ENCODE measurements at regions of chr5 and their contacts with region 1.

Region 1: DNA sequence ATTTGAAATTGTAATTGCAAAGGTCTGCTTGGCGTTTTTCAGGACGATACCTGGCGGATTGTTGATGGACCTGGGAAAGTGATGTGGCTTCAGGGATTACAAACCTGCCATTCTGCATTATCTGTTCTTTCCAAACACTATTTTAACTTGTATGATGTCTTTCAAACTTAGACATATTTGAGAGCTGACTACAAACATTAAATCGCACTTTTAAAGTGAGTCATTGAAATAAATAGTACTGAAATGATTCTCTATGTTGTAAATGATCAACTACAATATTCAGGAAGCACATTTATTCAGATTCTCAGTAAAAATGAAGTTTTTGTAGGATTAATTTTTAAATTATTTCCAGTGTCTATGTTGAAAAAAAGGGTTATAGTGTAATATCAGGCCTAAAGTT is 32.3 kb upstream of the TMEM171 start:
- ATAC-seq: no peak
- H3K4me3 ChIP-seq: no peak overlapping the region
- H3K27ac ChIP-seq: no peak overlapping the region
- H3K4me1 ChIP-seq: no peaks in the 10 kb centered on the region

Region 2: DNA sequence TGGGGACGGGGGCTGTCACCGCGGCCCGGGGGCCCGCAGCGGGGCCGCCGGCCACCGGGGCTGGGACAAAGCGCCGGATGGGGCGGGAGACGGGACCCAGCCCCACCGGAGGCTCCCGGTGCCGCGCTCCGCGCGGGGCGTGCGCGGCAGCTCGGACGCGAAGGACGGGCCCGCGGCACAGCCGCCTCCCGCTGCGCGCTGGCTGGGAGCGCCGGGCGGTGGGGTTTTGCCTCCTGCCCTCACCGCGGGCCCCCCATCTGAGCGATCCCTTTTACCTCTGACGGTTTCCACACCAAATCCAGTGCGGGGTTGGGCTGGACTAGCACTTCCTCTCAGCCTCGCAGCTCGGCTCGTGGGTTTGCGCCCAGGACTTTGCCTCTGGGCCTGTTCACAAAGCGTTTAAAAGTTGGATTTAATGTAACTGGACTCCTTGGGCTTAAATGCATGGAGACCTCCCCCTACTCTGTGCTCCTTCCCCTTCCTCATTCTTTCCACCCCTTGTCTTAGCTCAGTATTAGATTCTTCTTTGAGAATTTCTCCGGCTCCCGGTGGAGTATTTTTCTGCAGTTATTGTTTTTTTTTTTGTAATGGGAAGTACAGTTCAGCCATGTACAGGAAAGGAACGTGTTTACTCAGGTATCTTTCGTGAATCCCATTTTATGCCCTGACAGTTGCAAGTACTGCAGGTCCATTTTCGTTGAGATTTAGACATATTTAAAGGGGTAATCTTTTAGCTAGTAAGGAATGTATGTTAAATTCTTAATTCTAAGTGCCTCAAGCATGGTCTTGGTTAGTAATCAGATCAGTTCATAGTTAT is 131.5 kb before region 1 on chr5:
- in situ Hi-C with region 1: no loop called
- ATAC-seq: peak in 4 of 8 experiments; percentile 35 to 61 (median 49)
- H3K4me3 ChIP-seq: peak overlapping the region; percentile 70 to 87 (median 78)
- H3K27ac ChIP-seq: peak overlapping the region; percentile 68 to 77
- H3K4me1 ChIP-seq: peaks cover 0 to 5% of the 10 kb centered on the region in 2 donors

Region 3: DNA sequence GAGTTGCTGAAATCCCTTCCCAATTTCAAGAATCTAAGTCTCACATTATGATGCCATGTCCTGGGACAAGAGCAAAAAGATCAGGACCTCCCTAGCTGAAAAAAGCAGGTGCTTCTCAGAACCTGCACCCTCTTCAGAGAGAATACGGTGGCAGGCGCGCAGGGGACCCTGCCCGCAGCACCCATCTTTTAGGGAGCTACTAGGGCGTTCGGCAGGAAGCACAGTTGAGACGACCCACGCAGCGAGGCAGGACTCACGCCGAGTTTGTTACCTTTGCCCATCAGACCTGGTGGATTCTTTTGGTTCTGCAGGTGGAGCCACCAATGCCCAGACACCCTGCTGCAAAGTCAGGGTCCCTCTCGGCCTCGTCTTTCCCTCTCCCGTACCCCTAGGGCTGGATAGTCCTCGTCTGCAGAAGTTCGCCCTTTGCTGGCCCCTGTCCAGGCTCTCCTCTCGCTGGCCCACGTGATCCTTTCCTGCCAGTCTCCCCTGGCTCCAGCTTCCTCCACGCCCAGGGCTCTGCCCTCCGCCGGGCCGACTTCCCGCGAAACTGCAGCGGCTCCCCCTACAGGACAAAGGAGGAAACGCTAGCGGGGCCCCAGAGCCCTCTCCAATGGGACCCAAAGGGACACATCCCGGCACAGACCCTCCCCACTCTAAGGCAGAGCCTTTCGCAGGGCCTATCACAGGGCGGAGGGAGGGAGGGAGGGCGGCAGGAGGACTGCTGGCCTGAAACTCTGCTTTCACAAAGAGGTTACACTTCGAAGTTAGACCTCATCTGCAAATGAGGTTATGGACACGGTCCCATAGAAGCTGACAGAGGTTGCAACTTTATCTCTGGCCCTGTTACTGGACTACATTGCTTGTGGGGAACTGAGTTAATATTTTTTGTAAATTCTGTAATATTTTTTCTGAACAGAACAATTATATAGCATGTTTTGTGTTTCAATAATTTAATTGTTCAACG is 113.8 kb after region 1 on chr5:
- in situ Hi-C with region 1: loop called in 1 of 9 experiments (anchors 10 kb)
- ATAC-seq: peak; percentile 44 to 99 (median 64)
- H3K4me3 ChIP-seq: no peak overlapping the region
- H3K27ac ChIP-seq: no peak overlapping the region
- H3K4me1 ChIP-seq: peaks cover 0 to 4% of the 10 kb centered on the region in 2 donors

Measured in motor neuron (in vitro differentiated cells).